MCF 10A (cell line): ENCODE measurements at regions of chr16 and their contacts with region 1.

Region 1: GRCh38 chr16:2056681-2057407 is 9.1 kb downstream of the TSC2 start:
- DNase-seq: no peak
- H3K4me3 Mint-ChIP-seq: no peak overlapping the region
- H3K27ac Mint-ChIP-seq: no peak overlapping the region
- H3K4me1 Mint-ChIP-seq: no peaks in the 10 kb centered on the region
- H3K27me3 Mint-ChIP-seq: no peaks in the 10 kb centered on the region
- CTCF ChIP-seq: no peak

Region 2: GRCh38 chr16:2023098-2023925 is 33.5 kb before region 1 on chr16:
- CTCF ChIA-PET with region 1: interaction called, 4 read pairs
- POLR2A ChIA-PET with region 1: no interaction called
- intact Hi-C with region 1: loop called (anchors 2 kb)
- DNase-seq: peak; percentile 88
- H3K4me3 Mint-ChIP-seq: peak overlapping the region; percentile 18
- H3K27ac Mint-ChIP-seq: peak overlapping the region; percentile 11
- H3K4me1 Mint-ChIP-seq: peaks cover 9% of the 10 kb centered on the region
- H3K27me3 Mint-ChIP-seq: no peaks in the 10 kb centered on the region
- CTCF ChIP-seq: peak; percentile 96